ENCODE measurements at regions of chr11 and their contacts with region 1.

Region 1: GRCh38 chr11:45846974-45847910 is at the start of gene CRY2:
- DNase-seq: peak; percentile 100
- H3K4me3 ChIP-seq: peak within 1 kb of the TSS; percentile 90 to 98 (median 94)
- H3K27ac ChIP-seq: peak within 1 kb of the TSS; percentile 98 to 99 (median 99)
- H3K4me1 ChIP-seq: peaks cover 0 to 60% (median 54%) of the 10 kb centered on the region in 4 donors
- H3K27me3 ChIP-seq: no peaks in the 10 kb centered on the region
- CTCF ChIP-seq: no peak
- EP300 ChIP-seq: peak in 2 of 4 donors; percentile 67 to 81
- POLR2A ChIP-seq: peak; percentile 98
- total RNA-seq, gene CRY2: 27.5 to 49.3 (median 38.9) TPM

Region 2: GRCh38 chr11:45676522-45677095 is 170.6 kb before region 1 on chr11:
- intact Hi-C with region 1: no loop called
- DNase-seq: peak; percentile 39
- H3K4me3 ChIP-seq: no peak overlapping the region
- H3K27ac ChIP-seq: no peak overlapping the region
- H3K4me1 ChIP-seq: no peaks in the 10 kb centered on the region
- H3K27me3 ChIP-seq: no peaks in the 10 kb centered on the region
- CTCF ChIP-seq: no peak
- EP300 ChIP-seq: no peak
- POLR2A ChIP-seq: no peak

Region 3: DNA sequence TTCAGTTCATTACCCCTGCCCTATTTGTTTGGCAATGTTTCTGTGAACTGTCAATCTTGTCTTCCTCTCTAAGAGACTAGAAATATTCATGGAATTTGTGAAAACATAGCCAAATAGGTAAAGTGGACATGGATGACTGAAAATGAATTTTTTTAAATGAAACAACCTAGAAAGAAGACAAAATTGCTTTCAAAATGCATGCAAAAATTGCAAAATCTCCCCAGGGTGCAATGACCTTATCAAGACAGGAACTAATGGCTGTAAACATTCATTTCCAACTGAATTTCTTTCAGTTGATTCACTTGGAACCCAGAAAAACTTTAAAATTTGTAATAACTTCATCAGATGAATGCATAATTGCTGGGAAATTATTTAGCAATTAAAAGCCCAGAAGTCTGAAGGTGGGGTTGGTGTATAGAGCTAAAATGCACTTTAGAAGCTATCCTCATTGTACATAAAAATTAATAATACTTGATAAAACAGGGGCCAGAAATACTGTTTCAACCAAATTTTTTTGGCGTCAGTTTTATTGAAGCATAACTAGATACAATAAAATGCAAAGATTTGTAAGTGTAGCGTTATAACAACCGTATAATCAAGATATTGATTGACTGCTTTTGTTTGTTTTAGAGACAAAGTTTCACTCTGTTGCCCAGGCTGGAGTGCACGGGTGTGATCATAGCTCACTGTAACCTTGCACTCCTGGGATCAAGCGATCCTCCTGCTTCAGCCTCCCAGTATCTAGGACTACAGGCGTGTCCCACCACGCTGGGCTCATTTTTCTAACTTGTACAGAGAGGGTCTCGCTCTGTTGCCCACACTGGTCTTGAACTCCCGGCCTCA is 69.9 kb before region 1 on chr11:
- intact Hi-C with region 1: no loop called
- DNase-seq: no peak
- H3K4me3 ChIP-seq: no peak overlapping the region
- H3K27ac ChIP-seq: no peak overlapping the region
- H3K4me1 ChIP-seq: peaks cover 0 to under 1% (median 0%) of the 10 kb centered on the region in 4 donors
- H3K27me3 ChIP-seq: no peaks in the 10 kb centered on the region
- CTCF ChIP-seq: no peak
- EP300 ChIP-seq: no peak
- POLR2A ChIP-seq: no peak

Region 4: DNA sequence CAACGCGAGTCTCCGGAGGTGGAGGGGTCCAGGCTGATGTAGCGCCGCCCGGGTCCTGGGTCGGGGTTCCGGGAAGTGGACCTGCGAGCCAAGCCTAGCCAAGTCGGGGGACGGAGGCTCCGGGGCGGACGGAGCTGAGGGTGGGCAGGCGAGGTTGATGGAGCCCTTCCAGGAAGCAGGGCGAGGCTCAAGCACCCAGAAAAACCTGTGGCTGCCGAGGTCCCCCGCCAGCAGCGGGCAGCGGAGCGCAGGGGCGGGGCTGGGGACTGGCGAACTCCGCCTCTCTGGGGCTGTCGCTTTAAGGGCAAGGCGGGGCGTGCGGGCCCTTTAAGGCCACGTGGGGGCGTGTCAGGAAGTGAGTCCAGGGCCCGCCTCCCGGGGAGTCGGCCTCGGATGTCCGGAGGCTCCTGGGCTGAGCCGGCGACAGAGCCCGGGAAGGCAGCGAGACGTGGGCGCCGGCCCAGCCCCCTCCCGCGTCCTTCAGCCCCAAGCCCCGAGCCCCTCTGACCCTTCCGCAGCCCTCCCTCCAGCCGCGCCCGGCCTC is 42.4 kb before region 1 on chr11 and contains the start of gene SLC35C1:
- intact Hi-C with region 1: loop called (anchors 2 kb)
- DNase-seq: peak; percentile 99
- H3K4me3 ChIP-seq: peak within 1 kb of the TSS; percentile 63 to 92 (median 77)
- H3K27ac ChIP-seq: peak within 1 kb of the TSS; percentile 87 to 94 (median 89)
- H3K4me1 ChIP-seq: peaks cover 0 to 47% (median 31%) of the 10 kb centered on the region in 4 donors
- H3K27me3 ChIP-seq: no peaks in the 10 kb centered on the region
- CTCF ChIP-seq: no peak
- EP300 ChIP-seq: no peak
- POLR2A ChIP-seq: peak; percentile 68 to 90
- total RNA-seq, gene SLC35C1: 5.3 to 8.6 (median 7.2) TPM

Region 5: GRCh38 chr11:45859661-45860140 is 12.5 kb after region 1 on chr11:
- intact Hi-C with region 1: loop called (anchors 2 kb)
- DNase-seq: peak; percentile 99
- H3K4me3 ChIP-seq: no peak overlapping the region
- H3K27ac ChIP-seq: peak overlapping the region; percentile 81 to 99 (median 88)
- H3K4me1 ChIP-seq: peaks cover 0 to 69% (median 67%) of the 10 kb centered on the region in 4 donors
- H3K27me3 ChIP-seq: no peaks in the 10 kb centered on the region
- CTCF ChIP-seq: no peak
- EP300 ChIP-seq: peak; percentile 67 to 96 (median 88)
- POLR2A ChIP-seq: no peak

Region 6: GRCh38 chr11:45899448-45900173 is 52.4 kb after region 1 on chr11:
- intact Hi-C with region 1: loop called (anchors 5 kb)
- DNase-seq: peak; percentile 94
- H3K4me3 ChIP-seq: peak overlapping the region; percentile 26 to 64 (median 58)
- H3K27ac ChIP-seq: peak overlapping the region; percentile 63 to 70 (median 68)
- H3K4me1 ChIP-seq: peaks cover 0 to 26% (median 22%) of the 10 kb centered on the region in 4 donors
- H3K27me3 ChIP-seq: peaks cover 0 to 6% (median 5%) of the 10 kb centered on the region in 3 donors
- CTCF ChIP-seq: no peak
- EP300 ChIP-seq: no peak
- POLR2A ChIP-seq: no peak

Region 7: DNA sequence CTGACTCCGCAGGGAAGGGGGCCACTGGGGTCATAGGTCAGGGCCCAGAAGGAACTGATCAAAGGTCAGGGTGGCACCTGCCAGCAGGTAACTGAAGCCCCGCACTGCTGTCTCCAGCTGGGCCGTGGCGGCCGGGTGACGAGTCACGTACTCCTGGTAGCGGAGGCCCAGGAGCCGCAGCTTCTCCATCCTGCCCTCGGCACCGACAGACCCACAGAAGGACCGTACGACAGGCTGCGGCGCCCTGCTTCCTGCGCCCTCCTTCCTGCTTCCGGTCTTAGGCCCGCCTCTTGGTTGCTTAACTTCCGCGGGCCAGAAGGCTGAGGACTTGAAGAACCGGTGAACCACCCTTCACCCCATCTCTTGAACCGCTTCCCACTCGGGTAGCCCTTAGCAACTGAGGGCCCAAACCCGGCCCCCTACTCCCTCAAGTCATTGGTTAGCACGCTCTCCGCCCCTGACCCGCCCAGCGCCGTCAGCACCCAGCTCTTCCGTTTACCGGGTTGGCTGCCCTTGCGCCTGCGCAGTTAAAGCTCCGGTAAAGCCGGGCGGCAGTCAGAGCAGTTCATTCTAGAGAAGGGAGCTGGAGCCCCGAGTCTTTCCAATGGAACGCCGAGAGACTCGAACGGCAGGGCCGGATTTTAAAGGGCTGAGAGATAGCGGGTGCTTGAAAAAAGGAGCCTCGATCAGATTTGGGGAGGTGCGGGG is 70.5 kb after region 1 on chr11 and contains the start of gene PEX16:
- intact Hi-C with region 1: loop called (anchors 1 kb)
- DNase-seq: peak; percentile 99
- H3K4me3 ChIP-seq: peak within 1 kb of the TSS; percentile 81 to 96 (median 86)
- H3K27ac ChIP-seq: peak within 1 kb of the TSS; percentile 90 to 92 (median 91)
- H3K4me1 ChIP-seq: peaks cover 0 to 31% (median 26%) of the 10 kb centered on the region in 4 donors
- H3K27me3 ChIP-seq: peaks cover 8 to 16% (median 13%) of the 10 kb centered on the region in 3 donors
- CTCF ChIP-seq: no peak
- EP300 ChIP-seq: peak in 1 of 4 donors; percentile 24
- POLR2A ChIP-seq: peak; percentile 63 to 75
- total RNA-seq, gene PEX16: 13.8 to 28.2 (median 21.6) TPM

Region 8: DNA sequence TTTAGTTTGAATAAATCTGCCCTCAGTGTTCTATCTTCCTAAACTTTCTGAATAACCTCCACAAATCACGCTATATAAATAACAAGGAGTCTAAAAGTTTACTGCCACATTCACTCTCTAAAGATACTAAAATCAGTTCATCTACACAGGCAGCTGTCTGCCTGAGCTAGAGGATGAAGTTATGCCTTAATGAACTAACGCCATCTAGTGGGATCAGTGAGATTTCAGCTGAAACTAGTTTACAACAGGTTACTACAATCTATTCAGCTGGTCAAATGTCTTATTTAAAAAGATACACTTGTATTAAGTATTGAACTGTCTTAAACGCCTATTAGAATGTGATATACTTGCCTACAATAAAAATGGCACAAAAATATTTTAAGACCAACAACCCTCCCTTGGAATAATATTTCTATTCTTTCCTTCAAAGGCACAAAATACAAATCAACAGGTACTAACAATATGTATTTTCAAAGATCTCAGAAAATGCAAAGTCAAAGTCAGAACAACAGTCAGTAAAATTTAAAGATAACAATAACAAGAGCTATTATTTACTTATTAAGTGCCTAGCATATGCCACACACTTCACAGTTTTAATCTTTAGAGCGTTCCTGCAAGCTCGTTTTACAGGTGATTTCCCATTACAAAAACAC is 159.3 kb after region 1 on chr11:
- intact Hi-C with region 1: loop called (anchors 5 kb)
- DNase-seq: no peak
- H3K4me3 ChIP-seq: no peak overlapping the region
- H3K27ac ChIP-seq: no peak overlapping the region
- H3K4me1 ChIP-seq: peaks cover 0 to 34% (median 18%) of the 10 kb centered on the region in 4 donors
- H3K27me3 ChIP-seq: no peaks in the 10 kb centered on the region
- CTCF ChIP-seq: peak in 3 of 4 experiments; percentile 55 to 65 (median 64)
- EP300 ChIP-seq: no peak
- POLR2A ChIP-seq: no peak

Measured in sigmoid colon (tissue), 7 donors.